Prostate gland (tissue), 2 donors: ENCODE measurements at regions of chr4 and their contacts with region 1.

Region 1: GRCh38 chr4:107757864-107758476 is 37.9 kb upstream of the PAPSS1 start:
- DNase-seq: no peak
- H3K4me3 ChIP-seq: no peak overlapping the region
- H3K27ac ChIP-seq: no peak overlapping the region
- H3K4me1 ChIP-seq: no peaks in the 10 kb centered on the region
- H3K27me3 ChIP-seq: no peaks in the 10 kb centered on the region
- CTCF ChIP-seq: peak; percentile 27 to 75 (median 64)
- POLR2A ChIP-seq: no peak

Region 2: GRCh38 chr4:107843391-107843790 is 85.4 kb after region 1 on chr4:
- intact Hi-C with region 1: no loop called
- DNase-seq: no peak
- H3K4me3 ChIP-seq: no peak overlapping the region
- H3K27ac ChIP-seq: no peak overlapping the region
- H3K4me1 ChIP-seq: no peaks in the 10 kb centered on the region
- H3K27me3 ChIP-seq: no peaks in the 10 kb centered on the region
- CTCF ChIP-seq: no peak
- POLR2A ChIP-seq: no peak

Region 3: DNA sequence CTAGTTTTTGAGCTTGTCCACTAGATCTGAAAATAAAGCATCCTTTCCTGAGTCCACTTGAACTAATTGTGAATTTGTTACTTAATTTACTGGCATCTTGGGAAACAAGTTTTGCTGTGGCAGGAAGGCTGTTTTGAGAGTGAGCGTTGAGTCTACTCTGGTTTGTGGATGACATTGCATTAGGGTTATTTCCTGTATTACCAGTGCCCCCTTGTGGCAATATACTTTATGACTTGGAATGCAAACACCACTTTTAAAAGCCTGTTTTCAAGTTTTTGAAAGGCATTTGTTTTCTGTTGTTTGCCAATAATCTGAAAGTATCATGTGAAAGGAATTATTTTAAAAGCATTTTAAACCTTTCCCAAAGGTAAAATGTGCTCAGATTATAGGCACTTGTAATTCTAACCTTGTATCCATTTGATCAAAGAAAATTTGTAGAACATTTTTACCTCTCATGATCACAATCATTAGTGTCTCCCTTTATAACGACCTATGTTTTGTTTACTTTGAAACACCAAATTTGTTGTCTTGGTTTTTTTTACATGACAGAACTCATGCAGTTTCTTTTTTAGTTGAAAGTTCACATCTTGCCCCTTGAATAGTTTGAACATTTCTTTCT is 155.4 kb after region 1 on chr4:
- intact Hi-C with region 1: loop called (anchors 2 kb)
- DNase-seq: peak; percentile 69
- H3K4me3 ChIP-seq: no peak overlapping the region
- H3K27ac ChIP-seq: no peak overlapping the region
- H3K4me1 ChIP-seq: no peaks in the 10 kb centered on the region
- H3K27me3 ChIP-seq: no peaks in the 10 kb centered on the region
- CTCF ChIP-seq: peak; percentile 56 to 91 (median 88)
- POLR2A ChIP-seq: no peak

Region 4: DNA sequence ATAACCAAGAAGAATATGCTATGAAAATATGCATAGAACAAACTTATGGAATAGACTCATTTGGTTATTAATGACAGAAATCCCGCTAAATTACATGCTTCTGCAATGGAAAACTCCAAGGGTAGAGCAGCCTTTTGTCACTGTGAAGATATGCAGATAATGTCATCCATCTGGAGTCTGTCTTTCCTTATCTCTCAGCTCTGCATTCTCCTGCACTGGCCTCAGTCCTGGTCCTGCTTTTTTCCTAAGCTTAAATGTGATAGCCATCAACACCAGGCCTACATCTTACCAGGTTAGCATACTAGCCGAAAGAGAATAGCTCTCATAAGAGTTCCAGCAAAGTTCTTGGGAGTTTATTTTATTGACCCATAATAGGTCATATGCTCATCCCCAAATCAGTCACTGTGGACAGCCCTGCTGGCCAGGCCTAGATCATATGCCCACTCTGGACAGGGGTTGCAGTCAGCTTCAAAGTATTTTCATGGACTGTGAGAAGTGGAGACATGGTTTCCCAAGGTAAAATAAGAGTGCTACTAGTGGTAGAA is 497.3 kb after region 1 on chr4:
- intact Hi-C with region 1: no loop called
- DNase-seq: no peak
- H3K4me3 ChIP-seq: no peak overlapping the region
- H3K27ac ChIP-seq: no peak overlapping the region
- H3K4me1 ChIP-seq: no peaks in the 10 kb centered on the region
- H3K27me3 ChIP-seq: no peaks in the 10 kb centered on the region
- CTCF ChIP-seq: no peak
- POLR2A ChIP-seq: no peak